Heart right ventricle (tissue), 16 donors: ENCODE measurements at regions of chr15 and their contacts with region 1.

Region 1: GRCh38 chr15:85044251-85044853 is 62.7 kb downstream of the PDE8A start:
- DNase-seq: peak in 1 of 2 donors; percentile 78
- ATAC-seq: peak; percentile 67 to 80 (median 72)
- H3K4me3 ChIP-seq: no peak overlapping the region
- H3K27ac ChIP-seq: peak overlapping the region in 4 of 10 donors; percentile 73 to 88 (median 78)
- H3K4me1 ChIP-seq: peaks cover 0 to 63% (median 39%) of the 10 kb centered on the region in 9 donors
- H3K27me3 ChIP-seq: no peaks in the 10 kb centered on the region
- CTCF ChIP-seq: peak; percentile 49 to 80 (median 70)

Region 2: GRCh38 chr15:84658080-84658787 is 386.1 kb before region 1 on chr15 and contains the start of gene NMB:
- intact Hi-C with region 1: no loop called
- DNase-seq: peak; percentile 70 to 80
- ATAC-seq: peak; percentile 59 to 73 (median 68)
- H3K4me3 ChIP-seq: peak within 1 kb of the TSS; percentile 37 to 75 (median 69)
- H3K27ac ChIP-seq: peak within 1 kb of the TSS; percentile 34 to 88 (median 76)
- H3K4me1 ChIP-seq: peaks cover 8 to 38% (median 24%) of the 10 kb centered on the region in 9 donors
- H3K27me3 ChIP-seq: no peaks in the 10 kb centered on the region
- CTCF ChIP-seq: peak; percentile 37 to 81 (median 56)
- total RNA-seq, gene NMB: 0.96 to 6.6 (median 2.1) TPM

Region 3: GRCh38 chr15:84947947-84948830 is 96.2 kb before region 1 on chr15:
- intact Hi-C with region 1: loop called in 1 of 10 experiments (anchors 5 kb)
- DNase-seq: peak in 1 of 2 donors; percentile 25
- ATAC-seq: peak in 7 of 8 donors; percentile 36 to 78 (median 39)
- H3K4me3 ChIP-seq: no peak overlapping the region
- H3K27ac ChIP-seq: peak overlapping the region in 7 of 10 donors; percentile 1 to 67 (median 28)
- H3K4me1 ChIP-seq: peaks cover 0 to 33% (median 16%) of the 10 kb centered on the region in 9 donors
- H3K27me3 ChIP-seq: no peaks in the 10 kb centered on the region
- CTCF ChIP-seq: no peak